Breast epithelium (tissue), 4 donors: ENCODE measurements at regions of chr16 and their contacts with region 1.

Region 1: GRCh38 chr16:49150341-49150740 is 131.3 kb downstream of the CBLN1 start:
- DNase-seq: no peak
- H3K4me3 ChIP-seq: no peak overlapping the region
- H3K27ac ChIP-seq: no peak overlapping the region
- H3K4me1 ChIP-seq: no peaks in the 10 kb centered on the region
- H3K27me3 ChIP-seq: no peaks in the 10 kb centered on the region
- CTCF ChIP-seq: no peak
- POLR2A ChIP-seq: no peak

Region 2: GRCh38 chr16:47213761-47214440 is 1936.4 kb before region 1 on chr16:
- intact Hi-C with region 1: no loop called
- DNase-seq: no peak
- H3K4me3 ChIP-seq: no peak overlapping the region
- H3K27ac ChIP-seq: no peak overlapping the region
- H3K4me1 ChIP-seq: no peaks in the 10 kb centered on the region
- H3K27me3 ChIP-seq: no peaks in the 10 kb centered on the region
- CTCF ChIP-seq: no peak
- POLR2A ChIP-seq: no peak

Region 3: GRCh38 chr16:48810803-48811453 is 339.4 kb before region 1 on chr16:
- intact Hi-C with region 1: loop called (anchors 5 kb)
- DNase-seq: no peak
- H3K4me3 ChIP-seq: peak overlapping the region; percentile 8 to 37 (median 10)
- H3K27ac ChIP-seq: no peak overlapping the region
- H3K4me1 ChIP-seq: no peaks in the 10 kb centered on the region
- H3K27me3 ChIP-seq: peaks cover 7 to 32% of the 10 kb centered on the region in 2 donors
- CTCF ChIP-seq: no peak
- POLR2A ChIP-seq: no peak

Region 4: GRCh38 chr16:49127103-49127502 is 23.2 kb before region 1 on chr16:
- intact Hi-C with region 1: no loop called
- DNase-seq: no peak
- H3K4me3 ChIP-seq: no peak overlapping the region
- H3K27ac ChIP-seq: no peak overlapping the region
- H3K4me1 ChIP-seq: no peaks in the 10 kb centered on the region
- H3K27me3 ChIP-seq: no peaks in the 10 kb centered on the region
- CTCF ChIP-seq: no peak
- POLR2A ChIP-seq: no peak

Region 5: DNA sequence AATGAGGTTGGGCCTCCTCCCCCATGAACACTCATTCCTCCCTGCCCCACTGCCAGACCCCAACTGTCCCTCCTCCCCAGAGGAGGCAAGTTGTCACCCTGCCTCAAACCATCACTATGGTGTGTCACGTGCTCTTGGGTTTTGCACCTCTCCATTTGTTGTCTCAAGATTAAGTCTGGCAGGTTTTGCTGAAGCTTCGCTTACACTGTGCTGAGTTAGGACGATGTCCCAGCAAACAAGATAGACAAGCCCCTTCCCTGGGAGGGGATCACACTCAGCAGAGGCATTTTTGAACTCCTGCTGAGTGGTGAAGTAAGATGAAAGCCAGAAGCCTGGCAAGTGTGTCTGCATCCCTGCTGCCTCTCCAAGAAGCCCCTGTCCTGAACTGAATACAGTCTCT is 53.0 kb after region 1 on chr16:
- intact Hi-C with region 1: no loop called
- DNase-seq: no peak
- H3K4me3 ChIP-seq: no peak overlapping the region
- H3K27ac ChIP-seq: no peak overlapping the region
- H3K4me1 ChIP-seq: no peaks in the 10 kb centered on the region
- H3K27me3 ChIP-seq: no peaks in the 10 kb centered on the region
- CTCF ChIP-seq: no peak
- POLR2A ChIP-seq: no peak